MCF 10A (cell line): ENCODE measurements at regions of chr1 and their contacts with region 1.

Region 1: GRCh38 chr1:202716654-202717053 is 6.4 kb upstream of the SYT2 start:
- DNase-seq: no peak
- H3K4me3 Mint-ChIP-seq: no peak overlapping the region
- H3K27ac Mint-ChIP-seq: no peak overlapping the region
- H3K4me1 Mint-ChIP-seq: no peaks in the 10 kb centered on the region
- H3K27me3 Mint-ChIP-seq: peaks cover 40% of the 10 kb centered on the region
- CTCF ChIP-seq: no peak

Region 2: GRCh38 chr1:202348509-202349205 is 368.0 kb before region 1 on chr1 and contains the start of gene PPP1R12B:
- CTCF ChIA-PET with region 1: interaction called, 111 read pairs
- POLR2A ChIA-PET with region 1: interaction called, 3 read pairs
- intact Hi-C with region 1: no loop called
- DNase-seq: peak; percentile 100
- H3K4me3 Mint-ChIP-seq: peak within 1 kb of the TSS; percentile 81
- H3K27ac Mint-ChIP-seq: peak within 1 kb of the TSS; percentile 78
- H3K4me1 Mint-ChIP-seq: peaks cover 33% of the 10 kb centered on the region
- H3K27me3 Mint-ChIP-seq: no peaks in the 10 kb centered on the region
- CTCF ChIP-seq: no peak
- total RNA-seq, gene PPP1R12B: 31.1 and 33.8 TPM in 2 replicates

Region 3: GRCh38 chr1:202501281-202501680 is 215.4 kb before region 1 on chr1:
- CTCF ChIA-PET with region 1: interaction called, 17 read pairs
- POLR2A ChIA-PET with region 1: interaction called, 4 read pairs
- intact Hi-C with region 1: loop called (anchors 1 kb)
- DNase-seq: peak; percentile 64
- H3K4me3 Mint-ChIP-seq: no peak overlapping the region
- H3K27ac Mint-ChIP-seq: no peak overlapping the region
- H3K4me1 Mint-ChIP-seq: peaks cover 10% of the 10 kb centered on the region
- H3K27me3 Mint-ChIP-seq: no peaks in the 10 kb centered on the region
- CTCF ChIP-seq: peak; percentile 89

Region 4: DNA sequence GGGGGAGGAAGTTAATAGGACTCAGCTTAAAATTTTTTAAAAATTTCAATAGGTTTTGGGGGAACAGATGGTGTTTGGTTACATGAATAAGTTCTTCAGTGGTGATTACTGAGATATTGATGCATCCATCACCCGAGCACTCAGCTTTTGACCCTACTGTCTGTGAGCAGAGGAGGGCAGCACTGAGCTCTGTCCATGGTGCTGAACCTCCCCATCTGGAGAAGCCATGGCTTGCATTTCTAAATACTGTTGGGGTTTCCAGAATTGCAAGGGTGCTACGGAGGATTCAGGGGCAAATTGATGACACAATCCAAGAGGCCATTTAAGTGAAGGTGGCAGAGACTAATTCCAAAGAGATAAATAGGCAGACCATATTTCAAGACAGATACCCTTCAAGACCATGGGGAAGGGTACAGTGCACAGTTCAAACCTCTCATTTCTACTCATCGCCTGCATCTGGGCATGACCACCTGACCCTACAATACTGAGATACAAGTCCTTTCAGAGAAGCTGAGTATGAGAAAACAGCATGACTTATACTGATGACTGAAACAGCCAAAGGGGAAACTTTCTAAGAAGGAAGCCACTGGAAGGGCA is 23.6 kb before region 1 on chr1:
- CTCF ChIA-PET with region 1: interaction called, 14 read pairs
- POLR2A ChIA-PET with region 1: interaction called, 3 read pairs
- intact Hi-C with region 1: no loop called
- DNase-seq: peak; percentile 89
- H3K4me3 Mint-ChIP-seq: no peak overlapping the region
- H3K27ac Mint-ChIP-seq: no peak overlapping the region
- H3K4me1 Mint-ChIP-seq: no peaks in the 10 kb centered on the region
- H3K27me3 Mint-ChIP-seq: peaks cover 99% of the 10 kb centered on the region
- CTCF ChIP-seq: peak; percentile 18